GM18951 (cell line): ENCODE measurements at regions of chr4 and their contacts with region 1.

Region 1: DNA sequence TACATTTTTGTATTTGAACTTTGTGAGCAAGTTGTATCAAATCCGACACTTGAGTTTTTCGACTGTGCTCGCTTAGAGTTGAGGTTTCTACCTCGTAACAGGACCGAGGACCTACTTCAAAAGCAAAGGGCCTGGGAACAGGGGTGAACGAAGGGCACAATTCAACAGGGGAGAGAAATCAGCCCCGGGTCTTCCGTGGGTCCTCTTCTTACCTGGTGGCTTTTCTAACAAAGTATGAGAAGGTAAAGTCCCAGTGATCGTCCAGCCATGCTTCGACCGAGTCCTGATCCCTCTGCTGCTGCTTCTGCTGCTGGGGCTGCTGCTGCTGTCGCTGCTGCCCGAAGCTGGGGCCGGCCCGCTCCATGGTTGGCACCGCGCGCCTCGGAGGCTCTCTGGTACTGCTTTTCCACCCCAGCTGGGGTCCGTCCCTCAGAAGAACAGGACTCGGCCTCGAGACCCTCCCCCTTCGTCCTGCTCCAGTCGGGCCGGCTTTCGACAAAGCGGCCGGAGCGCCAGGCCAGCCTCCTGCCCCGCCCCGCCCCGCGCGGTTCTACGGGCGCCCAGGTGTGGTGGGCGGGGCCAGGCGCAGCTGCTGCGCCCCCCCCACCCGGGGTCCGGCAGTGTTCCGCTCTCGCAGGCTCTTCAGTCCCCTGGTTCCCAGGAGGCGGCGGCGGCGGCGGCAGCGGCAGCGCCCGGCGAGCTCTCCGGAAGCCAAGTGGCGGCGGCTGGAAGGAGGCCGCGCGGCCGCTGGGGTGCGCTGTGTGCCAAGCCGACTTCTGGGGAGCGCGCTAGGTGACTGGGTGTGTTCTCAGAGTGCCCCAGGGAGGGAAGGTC is at the start of gene PDE5A:
- POLR2A ChIP-seq: no peak

Region 2: DNA sequence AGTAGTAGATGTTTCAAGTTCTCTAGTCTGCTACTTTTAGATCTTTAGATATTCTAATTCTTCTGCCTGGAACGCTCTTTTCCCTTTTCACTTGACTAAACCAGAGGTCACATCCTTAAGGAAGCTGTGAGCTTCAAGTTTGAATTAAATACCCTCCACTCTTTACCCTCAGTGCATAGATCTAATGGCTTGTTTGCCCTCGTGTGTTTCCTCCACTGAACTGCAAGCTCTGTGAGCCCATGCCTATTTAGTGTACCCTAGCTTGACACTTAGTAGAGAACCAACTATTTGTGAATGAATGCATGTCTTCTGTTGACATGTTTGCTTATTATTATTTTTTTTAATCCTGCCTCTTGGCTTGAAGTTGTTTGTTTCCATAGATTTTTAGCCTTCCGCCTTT is 138.2 kb before region 1 on chr4:
- in situ Hi-C with region 1: no loop called
- POLR2A ChIP-seq: no peak

Region 3: GRCh38 chr4:119816473-119816872 is 187.9 kb after region 1 on chr4:
- in situ Hi-C with region 1: no loop called
- POLR2A ChIP-seq: no peak

Region 4: DNA sequence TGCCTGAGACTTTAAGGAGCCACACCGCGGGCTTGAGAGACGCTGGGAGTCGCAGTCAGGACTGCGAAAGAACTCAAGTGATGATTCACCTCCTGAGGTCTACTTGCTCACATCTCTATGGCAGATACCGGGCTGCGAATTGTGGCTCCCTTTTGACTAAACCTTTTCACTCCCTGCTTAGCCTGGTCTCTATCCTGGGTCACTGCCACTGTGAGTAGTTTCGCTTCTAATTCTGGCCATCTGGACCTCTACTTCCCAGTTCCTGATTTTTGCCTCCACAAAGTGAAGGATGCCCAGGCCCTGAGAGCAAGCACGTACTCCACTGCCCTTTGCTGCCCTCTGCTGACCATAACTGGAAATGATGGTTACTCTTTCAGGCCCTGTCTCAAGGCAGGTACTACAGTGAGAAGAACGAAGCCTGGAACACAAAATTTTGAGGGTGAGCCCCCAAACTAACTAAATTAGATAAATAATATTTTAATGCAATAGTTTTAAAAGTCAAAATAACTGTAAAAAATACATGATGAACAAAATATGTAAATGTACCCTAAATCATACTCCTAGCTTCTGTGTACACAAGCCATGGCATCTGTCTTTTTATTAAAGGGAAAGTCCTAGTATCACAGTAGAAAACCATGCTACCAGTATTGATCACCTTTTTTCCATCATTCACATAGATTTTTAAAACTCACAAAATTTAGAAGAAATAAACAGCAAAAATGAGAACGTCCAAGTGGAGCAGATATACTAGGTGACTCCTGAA is 421.4 kb after region 1 on chr4:
- in situ Hi-C with region 1: loop called (anchors 25 kb)
- POLR2A ChIP-seq: no peak